Activated CD4-positive, alpha-beta T cell treated with anti-CD3 and anti-CD28 coated beads for 36 hours (primary cell): ENCODE measurements at regions of chr9 and their contacts with region 1.

Region 1: GRCh38 chr9:112939418-112939817 is 48.7 kb upstream of the SLC46A2 start:
- DNase-seq: no peak
- ATAC-seq: no peak
- H3K4me3 Mint-ChIP-seq: no peak overlapping the region
- H3K27ac Mint-ChIP-seq: no peak overlapping the region
- H3K4me1 Mint-ChIP-seq: no peaks in the 10 kb centered on the region
- H3K27me3 Mint-ChIP-seq: peaks cover 15% of the 10 kb centered on the region

Region 2: DNA sequence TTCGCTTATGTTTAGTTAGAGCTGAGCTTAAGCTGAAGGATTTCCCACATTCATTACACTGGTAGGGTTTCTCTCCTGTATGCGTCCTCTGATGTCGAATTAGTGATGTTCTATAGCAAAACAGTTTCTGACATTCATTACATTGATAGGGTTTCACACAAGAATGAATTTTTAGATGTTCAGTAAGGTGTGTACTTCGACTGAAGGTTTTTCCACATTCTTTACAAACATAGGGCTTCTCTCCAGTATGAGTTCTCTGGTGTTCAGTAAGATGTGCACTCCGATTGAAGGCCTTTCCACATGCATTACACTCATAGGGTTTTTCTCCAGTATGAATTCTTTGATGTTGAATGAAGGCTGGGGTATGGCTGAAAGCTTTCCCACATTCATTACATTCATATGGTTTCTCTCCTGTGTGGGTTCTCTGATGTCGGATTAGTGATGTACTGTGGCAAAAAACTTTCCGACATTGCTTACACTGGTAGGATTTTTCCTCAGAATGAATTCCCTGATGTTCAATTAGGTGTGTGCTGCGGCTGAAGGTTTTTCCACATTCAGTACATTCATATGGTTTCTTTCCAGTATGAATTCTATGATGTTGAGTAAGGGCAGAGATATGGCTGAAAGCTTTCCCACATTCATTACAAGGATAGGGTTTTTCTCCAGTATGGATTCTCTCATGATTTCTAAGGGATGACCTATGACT is 58.0 kb after region 1 on chr9:
- CTCF ChIA-PET with region 1: no interaction called
- POLR2A ChIA-PET with region 1: no interaction called
- intact Hi-C with region 1: loop called in 1 of 2 experiments (anchors 10 kb)
- DNase-seq: no peak
- ATAC-seq: no peak
- H3K4me3 Mint-ChIP-seq: no peak overlapping the region
- H3K27ac Mint-ChIP-seq: no peak overlapping the region
- H3K4me1 Mint-ChIP-seq: no peaks in the 10 kb centered on the region
- H3K27me3 Mint-ChIP-seq: no peaks in the 10 kb centered on the region

Region 3: DNA sequence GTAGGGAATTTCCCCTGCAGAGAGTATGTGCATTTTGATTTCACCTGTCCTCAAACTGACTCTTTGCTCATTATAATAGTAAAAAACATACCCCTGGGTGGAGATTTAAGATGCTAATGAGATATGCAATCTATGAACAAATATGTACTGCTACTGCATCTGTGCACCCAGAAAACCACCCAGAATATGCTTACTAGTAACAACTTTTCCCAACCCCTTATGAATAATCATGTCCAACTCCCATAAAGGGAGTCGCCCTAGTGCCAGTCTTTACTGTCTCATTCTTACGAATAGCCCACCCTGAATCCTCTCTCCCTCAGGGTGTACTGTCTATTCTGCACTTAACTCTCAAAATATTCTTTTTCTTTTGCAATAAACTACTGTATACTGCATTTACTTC is 156.1 kb after region 1 on chr9:
- CTCF ChIA-PET with region 1: no interaction called
- POLR2A ChIA-PET with region 1: no interaction called
- intact Hi-C with region 1: loop called in 1 of 2 experiments (anchors 10 kb)
- DNase-seq: no peak
- ATAC-seq: no peak
- H3K4me3 Mint-ChIP-seq: no peak overlapping the region
- H3K27ac Mint-ChIP-seq: no peak overlapping the region
- H3K4me1 Mint-ChIP-seq: no peaks in the 10 kb centered on the region
- H3K27me3 Mint-ChIP-seq: peaks cover 46% of the 10 kb centered on the region

Region 4: DNA sequence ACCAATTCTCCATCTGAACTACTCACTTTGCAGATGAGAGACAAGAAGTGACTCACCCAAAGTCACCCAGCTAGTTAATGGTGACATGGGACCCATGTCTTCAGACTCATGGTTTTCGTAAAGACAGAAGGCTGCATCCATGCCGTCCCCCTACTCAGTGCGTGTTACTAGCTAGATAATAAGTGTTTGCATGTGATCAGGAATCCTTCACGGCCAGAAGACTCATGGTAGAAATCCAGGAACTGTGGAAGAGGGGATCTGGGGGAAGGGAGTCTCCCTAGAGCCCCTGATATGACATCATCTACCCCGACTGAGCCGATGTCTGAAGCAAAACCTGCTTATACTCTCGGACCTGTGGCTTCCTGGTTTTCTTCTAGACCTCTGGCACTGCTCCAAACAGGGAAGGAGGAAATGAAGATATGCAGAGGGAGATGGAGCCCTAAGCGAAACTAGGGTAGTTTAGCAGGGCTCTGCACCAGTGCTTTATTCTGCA is 360.4 kb after region 1 on chr9:
- CTCF ChIA-PET with region 1: no interaction called
- POLR2A ChIA-PET with region 1: no interaction called
- intact Hi-C with region 1: no loop called
- DNase-seq: no peak
- ATAC-seq: no peak
- H3K4me3 Mint-ChIP-seq: no peak overlapping the region
- H3K27ac Mint-ChIP-seq: no peak overlapping the region
- H3K4me1 Mint-ChIP-seq: no peaks in the 10 kb centered on the region
- H3K27me3 Mint-ChIP-seq: peaks cover 2% of the 10 kb centered on the region

Region 5: DNA sequence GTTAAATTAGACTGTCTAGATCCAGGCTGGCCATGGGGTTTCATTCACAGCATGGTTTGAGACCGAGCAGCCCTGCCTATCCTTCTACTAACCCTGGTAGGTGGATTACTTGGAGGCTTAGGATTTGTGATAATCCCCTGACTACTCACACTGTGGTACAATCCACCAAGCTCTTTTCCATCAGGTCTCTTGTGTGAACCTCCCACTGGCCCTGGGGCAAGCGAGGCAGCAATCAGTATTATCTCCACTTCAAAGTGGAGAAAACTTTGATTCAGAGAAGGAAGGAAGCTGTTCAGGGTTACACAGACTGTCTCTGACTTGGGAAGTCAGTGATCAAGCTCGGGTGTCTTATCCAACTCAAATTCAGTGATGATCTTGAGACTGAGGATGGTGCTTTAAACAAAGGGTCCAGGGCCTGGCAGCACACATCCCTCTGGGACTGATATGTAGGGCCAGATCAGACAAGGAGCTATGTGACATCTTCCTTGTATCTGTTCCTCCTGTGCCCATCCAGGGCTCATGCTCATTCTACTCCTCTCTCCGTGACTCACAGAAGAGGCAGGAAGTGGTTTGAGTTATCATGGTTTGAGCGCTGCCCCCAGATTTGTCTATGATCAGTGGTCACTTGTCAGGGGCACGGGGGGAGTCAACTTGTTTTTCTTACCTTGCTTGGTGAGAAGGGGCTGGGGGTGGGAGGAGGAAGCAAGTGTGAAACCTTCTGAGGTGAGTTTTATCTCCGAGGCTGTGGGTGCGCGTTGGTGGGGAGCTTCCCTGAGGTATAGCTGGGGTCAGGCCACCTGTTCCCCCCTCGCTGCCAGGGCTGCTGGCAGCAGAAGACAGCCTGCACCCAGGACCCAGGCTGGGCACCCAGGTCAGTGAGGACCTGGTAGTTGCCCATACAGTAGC is 572.7 kb after region 1 on chr9:
- CTCF ChIA-PET with region 1: no interaction called
- POLR2A ChIA-PET with region 1: no interaction called
- intact Hi-C with region 1: no loop called
- DNase-seq: peak; percentile 84
- ATAC-seq: peak; percentile 72
- H3K4me3 Mint-ChIP-seq: peak overlapping the region; percentile 57
- H3K27ac Mint-ChIP-seq: peak overlapping the region; percentile 93
- H3K4me1 Mint-ChIP-seq: peaks cover 58% of the 10 kb centered on the region
- H3K27me3 Mint-ChIP-seq: no peaks in the 10 kb centered on the region